OCI-LY7 (cell line): ENCODE measurements at regions of chr6 and their contacts with region 1.

Region 1: DNA sequence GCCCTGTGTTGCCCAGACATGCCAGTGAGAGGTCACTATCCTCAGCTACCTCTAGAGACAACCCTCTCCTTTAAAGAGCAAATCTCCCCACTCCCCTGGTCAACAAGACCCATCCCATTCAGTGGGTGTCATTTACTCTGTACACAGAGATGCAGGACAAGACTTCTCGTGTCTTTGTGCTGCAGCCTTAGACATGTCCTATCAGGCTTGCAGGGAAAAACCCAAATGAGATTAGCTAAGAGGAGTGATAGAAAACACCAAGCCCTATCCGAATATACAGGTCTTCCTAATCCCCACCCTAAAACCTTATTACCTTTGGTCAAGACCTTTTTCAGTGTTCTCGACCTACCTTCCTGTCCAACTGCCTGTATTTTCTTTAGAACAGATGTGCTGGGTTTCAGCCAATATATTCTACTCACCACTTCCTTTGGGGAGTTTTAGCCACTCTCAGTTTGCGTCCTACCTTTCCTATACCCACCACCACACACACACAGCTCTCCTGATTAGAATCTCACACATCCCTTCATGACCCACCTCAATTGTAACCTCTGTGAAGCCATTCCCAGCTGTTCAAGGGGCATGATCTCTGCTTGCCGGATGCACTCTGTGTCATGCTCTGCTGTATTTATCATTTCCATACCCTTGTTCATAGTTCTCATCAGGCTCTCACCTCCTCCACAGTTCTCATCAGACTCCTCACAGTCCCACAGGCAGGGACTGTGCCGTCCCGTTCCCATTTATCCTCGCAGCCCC is 39.7 kb downstream of the TRAM2 start:
- DNase-seq: peak; percentile 81
- H3K4me3 ChIP-seq: peak overlapping the region; percentile 55
- H3K27ac ChIP-seq: peak overlapping the region; percentile 95
- H3K4me1 ChIP-seq: peaks cover 79% of the 10 kb centered on the region
- CTCF ChIP-seq: no peak

Region 2: GRCh38 chr6:52497652-52498408 is 39.3 kb before region 1 on chr6:
- CTCF ChIA-PET with region 1: interaction called, 13 read pairs
- POLR2A ChIA-PET with region 1: interaction called, 34 read pairs
- intact Hi-C with region 1: loop called (anchors 1 kb)
- DNase-seq: peak; percentile 95
- H3K4me3 ChIP-seq: peak overlapping the region; percentile 59
- H3K27ac ChIP-seq: peak overlapping the region; percentile 99
- H3K4me1 ChIP-seq: peaks cover 75% of the 10 kb centered on the region
- CTCF ChIP-seq: no peak

Region 3: GRCh38 chr6:52522151-52522626 is 15.0 kb before region 1 on chr6:
- CTCF ChIA-PET with region 1: interaction called, 8 read pairs
- POLR2A ChIA-PET with region 1: interaction called, 28 read pairs
- intact Hi-C with region 1: no loop called
- DNase-seq: no peak
- H3K4me3 ChIP-seq: no peak overlapping the region
- H3K27ac ChIP-seq: no peak overlapping the region
- H3K4me1 ChIP-seq: peaks cover 31% of the 10 kb centered on the region
- CTCF ChIP-seq: no peak

Region 4: GRCh38 chr6:52551401-52552277 is 14.5 kb after region 1 on chr6:
- CTCF ChIA-PET with region 1: interaction called, 8 read pairs
- POLR2A ChIA-PET with region 1: interaction called, 72 read pairs
- intact Hi-C with region 1: loop called (anchors 1 kb)
- DNase-seq: no peak
- H3K4me3 ChIP-seq: peak overlapping the region; percentile 38
- H3K27ac ChIP-seq: peak overlapping the region; percentile 66
- H3K4me1 ChIP-seq: peaks cover 71% of the 10 kb centered on the region
- CTCF ChIP-seq: no peak

Region 5: GRCh38 chr6:52598123-52598823 is 61.1 kb after region 1 on chr6:
- CTCF ChIA-PET with region 1: interaction called, 6 read pairs
- POLR2A ChIA-PET with region 1: interaction called, 18 read pairs
- intact Hi-C with region 1: loop called (anchors 1 kb)
- DNase-seq: peak; percentile 84
- H3K4me3 ChIP-seq: peak overlapping the region; percentile 19
- H3K27ac ChIP-seq: peak overlapping the region; percentile 89
- H3K4me1 ChIP-seq: peaks cover 67% of the 10 kb centered on the region
- CTCF ChIP-seq: peak; percentile 86